GM18951 (cell line): ENCODE measurements at regions of chr10 and their contacts with region 1.

Region 1: DNA sequence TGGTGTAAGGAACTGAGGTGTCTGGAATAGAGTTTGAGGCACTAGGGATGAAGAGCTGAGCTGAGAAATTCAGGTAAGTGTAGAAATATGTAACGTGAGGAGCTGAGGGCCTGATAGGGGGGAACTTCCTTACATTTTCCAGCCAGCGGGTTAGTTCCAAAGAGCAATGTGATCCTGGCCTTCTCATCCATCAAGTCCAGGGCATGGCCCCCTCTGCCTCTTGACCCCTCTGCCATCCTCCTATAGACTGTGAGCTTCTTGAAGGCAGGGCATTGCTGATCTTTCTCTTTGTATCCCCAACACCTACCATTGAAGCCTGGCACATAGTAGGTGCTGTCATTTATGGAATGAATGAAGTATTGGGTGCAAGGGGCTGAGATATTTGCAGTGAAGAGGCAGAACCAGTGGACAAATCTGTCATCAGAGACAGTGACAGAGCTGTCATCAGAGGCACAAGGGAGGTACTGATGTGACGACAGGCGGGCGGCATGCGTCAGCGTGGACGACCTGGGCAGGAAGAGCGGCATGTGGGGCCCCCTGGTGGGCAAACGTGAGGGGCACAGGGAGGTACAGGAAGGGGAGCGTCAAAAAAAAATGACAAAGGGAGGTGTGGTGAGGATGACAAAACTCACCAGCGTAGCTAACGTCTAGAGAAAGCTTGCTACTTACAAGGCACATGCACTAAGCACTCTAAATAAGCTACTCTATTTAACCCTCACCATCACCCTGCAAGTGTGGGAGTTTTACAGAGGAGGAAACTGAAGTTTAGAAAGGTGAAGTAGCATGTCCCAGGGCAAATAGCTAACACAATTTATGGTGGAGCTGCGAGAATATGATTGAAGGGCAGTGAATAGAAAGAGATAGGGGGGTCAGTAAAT is 5.2 kb upstream of the CAMK2G start:
- POLR2A ChIP-seq: no peak

Region 2: DNA sequence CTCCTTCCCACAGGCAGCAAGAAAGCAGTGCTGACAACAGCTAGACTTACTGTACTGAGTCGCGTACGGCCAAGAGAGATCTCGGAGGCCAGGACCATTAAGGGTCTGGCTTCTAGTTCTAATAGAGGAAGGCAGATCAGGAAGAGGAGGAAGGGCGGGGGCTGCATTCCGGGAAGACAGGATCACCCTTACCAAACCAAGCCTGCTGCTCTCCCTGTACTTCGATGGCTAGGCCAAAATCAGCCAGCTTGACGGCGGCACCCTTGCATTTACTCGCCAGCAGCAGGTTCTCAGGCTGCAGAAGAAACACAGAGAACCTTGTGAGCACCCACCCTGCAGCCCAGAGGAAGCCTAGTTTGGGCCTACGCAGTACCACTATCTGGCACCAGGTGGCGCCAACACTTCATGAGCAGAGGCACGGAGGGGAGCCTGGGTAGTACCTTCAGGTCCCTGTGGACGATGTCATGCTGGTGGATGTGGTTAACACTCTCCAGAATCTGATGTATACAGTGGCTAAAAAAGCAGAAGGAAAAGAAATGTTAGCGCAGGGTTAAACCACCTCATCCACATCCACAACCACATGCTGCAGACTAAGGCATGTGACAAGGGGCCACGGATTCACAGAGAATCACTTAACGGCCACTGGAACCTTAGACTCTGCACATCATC is 30.6 kb before region 1 on chr10:
- in situ Hi-C with region 1: loop called (anchors 5 kb)
- POLR2A ChIP-seq: no peak

Region 3: DNA sequence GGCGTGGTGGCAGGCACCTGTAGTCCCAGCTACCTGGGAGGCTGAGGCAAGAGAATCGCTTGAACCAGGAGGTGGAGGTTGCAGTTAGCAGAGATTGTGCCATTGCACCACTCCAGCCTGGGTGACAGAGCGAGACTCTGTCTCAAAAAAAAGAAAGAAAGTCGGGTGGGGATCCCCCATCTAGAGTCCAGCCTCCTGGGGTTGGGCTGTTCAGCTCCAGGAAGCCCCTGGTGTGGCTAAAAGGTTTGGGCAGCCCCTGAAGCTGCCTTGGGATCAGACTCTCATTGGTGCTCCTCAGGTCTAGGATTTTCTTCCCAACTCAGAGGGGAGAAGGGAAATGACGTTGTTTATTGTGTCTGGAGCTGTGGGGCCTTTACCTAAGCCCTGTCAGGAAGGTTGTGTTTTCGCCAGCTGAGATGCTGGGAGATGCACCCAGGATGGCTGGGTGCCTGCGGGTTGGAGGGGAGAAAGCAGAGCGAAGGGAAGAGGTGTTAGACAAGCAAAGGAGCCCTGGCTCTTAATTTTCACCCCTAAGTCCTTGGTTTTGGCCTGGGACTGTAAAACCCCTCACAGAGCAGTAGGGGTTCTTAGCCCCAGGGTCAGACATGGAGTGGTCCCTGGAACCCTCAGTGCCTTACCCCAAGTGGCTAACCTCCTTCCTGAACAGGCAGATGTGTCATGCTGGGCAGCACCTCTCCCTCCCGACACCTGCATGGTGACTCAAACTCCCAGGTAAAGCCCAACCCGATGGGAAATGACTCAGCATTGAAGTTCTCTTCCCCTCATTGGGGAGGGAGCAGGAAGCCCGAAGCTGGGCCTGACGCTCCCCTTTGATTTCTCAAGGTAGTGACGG is 52.5 kb after region 1 on chr10:
- in situ Hi-C with region 1: loop called (anchors 10 kb)
- POLR2A ChIP-seq: no peak

Region 4: DNA sequence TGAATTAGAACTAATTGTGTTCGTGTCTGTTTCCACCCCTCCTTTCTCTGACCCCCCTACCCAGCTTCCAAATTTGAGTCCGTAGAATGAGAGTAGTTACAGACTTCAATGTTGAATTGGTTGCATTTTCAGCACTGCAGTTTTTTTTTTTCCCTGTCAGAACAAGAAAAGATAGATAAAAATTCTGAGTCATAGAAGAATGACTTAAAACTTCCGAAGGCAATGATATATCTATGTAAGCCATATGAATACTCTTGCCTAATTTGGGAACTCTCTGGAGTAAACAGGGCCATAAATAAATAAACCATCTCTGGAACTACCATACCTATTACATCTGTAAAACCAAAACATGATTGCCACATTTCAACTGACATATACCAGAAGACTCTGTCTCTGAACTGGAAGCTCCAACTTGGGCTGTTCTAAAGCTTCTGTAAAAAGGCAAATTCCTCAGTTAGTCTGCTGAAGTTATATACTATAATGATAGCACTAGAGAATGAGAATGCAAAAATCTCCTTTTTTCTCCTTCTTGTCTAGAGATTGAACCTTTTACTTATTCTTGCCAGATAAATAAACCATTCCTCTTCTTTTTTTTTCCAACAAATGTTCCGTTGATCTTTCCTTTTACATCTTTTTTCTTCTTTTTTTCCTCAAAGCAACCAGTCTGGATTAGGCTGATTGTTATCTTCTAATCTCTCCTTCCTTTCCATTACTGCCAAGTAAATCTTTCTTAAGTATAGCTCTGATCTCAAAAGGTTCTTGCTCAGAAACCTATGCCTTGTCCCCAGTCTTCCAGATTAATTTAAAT is 141.9 kb after region 1 on chr10:
- in situ Hi-C with region 1: no loop called
- POLR2A ChIP-seq: no peak

Region 5: DNA sequence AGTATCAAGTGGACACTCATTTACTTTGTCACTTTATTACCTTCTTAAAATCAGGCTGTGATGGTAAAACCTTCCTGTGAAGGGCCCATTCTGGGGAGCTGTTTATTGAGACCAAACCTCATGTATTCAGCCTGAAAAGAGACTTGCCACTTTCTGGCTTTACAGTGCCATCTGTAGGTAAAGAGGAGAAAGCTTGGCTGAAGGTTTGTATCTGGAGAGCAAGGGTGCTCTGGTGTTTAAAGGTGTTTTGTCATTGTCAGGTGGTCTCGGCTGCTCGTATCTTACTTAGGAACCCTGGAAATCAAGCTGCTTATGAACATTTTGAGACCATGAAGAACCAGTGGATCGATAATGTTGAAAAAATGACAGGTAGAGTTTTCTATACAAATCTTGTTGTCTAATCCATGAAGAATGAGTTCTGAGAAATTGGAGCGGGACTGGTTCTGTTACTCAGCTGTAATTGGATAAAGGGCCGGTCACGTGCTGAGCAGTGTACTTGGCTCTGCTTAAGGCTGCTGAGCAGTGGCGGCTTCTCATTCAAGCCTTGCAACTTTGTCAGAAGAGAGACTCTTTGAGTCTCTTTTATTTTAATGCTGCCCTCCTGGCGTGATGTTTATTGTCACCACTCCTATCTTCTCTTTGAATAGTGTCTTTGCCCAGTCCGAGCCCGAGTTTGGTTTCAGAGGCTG is 224.2 kb after region 1 on chr10:
- in situ Hi-C with region 1: loop called (anchors 10 kb)
- POLR2A ChIP-seq: no peak

Region 6: DNA sequence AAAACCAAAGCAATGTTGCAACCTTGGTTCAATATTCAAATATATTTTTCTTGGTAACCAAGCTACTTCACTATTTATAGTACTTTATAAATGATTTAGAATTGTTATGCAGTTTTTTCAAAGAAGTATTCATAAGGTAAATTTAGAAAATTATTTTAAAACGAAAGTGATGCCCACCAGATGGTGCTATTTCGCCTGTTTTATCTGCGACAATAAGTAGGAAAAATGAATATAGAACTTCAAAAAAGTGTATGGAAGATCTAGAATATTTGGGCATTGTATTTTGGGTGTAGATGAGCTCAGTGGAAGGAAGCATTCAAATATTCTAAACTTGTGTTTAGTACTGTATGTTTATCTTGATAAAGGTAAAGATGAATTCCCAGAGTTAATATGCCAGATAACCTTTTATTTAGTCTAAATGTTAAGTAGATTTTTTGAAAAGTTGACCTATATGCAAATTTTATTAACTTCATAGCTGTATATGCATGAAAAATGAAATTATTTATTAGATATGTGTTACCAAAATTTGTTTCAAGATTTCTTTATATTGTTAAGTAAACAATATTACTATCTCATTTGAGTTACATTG is 364.7 kb after region 1 on chr10:
- in situ Hi-C with region 1: loop called (anchors 25 kb)
- POLR2A ChIP-seq: no peak